Activated naive CD4-positive, alpha-beta T cell treated with anti-CD3 and anti-CD28 coated beads, Interleukin-2, amount 10 ng/mL, durations not matched to agents 7 days and 5 days (primary cell): ENCODE measurements at regions of chr3 and their contacts with region 1.

Region 1: DNA sequence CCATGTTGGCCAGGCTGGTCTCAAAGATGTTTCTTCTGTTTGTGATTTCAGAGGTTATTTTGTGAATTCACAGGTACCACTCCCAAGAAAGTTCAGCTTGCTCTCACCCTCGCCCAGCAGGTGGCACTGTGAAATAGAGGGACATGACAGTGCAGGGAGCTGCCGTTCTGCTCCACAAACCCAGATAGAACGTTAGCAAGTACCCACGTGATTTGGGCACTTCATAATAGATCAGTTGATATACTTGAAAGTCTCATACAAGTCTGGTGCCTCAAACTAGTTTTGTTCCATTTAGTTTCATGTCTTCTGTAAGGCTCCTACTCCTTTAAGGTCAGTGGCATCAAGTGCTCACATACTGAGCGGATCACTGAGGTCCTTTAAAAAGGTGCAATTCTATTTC is 45.5 kb downstream of the FILIP1L start:
- DNase-seq: peak; percentile 91
- H3K4me3 Mint-ChIP-seq: no peak overlapping the region
- H3K27ac Mint-ChIP-seq: peak overlapping the region; percentile 13
- H3K4me1 Mint-ChIP-seq: peaks cover 58% of the 10 kb centered on the region
- H3K27me3 Mint-ChIP-seq: no peaks in the 10 kb centered on the region

Region 2: DNA sequence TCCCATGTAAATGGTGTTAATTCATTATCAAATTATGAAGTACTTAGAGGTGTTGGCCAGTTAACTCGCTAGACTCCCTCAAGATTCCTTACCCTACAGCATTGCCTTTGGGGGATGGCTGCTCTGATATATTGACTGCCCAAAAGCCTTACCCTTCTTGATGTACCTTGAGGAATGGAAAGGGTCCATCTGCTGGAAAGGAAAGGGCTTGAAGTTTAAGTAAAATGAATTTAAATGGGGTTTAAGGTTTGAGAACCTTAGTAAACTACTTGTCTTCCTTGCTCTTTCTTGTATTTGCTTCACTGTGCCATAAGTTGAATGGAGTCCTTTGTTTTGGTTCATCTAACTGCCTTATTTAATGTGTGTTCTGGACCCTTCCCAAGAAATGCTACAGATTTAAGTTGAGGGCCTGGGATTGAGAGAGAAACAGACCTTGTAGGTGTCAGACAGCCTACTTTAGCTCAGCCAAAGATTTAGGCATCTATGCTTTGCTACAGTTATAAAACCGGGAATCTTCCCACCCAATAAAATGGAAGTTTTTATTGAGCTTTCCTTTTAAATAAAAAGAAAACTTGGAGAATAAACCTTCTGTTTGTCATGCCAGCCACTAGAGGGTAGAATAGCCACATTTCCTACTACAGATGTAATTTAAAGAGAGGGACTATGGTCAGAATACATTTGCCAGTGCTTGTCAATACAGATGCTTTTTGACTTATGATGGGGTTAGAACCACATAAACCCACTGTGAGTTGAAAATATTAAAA is 225.8 kb before region 1 on chr3:
- CTCF ChIA-PET with region 1: interaction called, 16 read pairs
- DNase-seq: no peak
- H3K4me3 Mint-ChIP-seq: no peak overlapping the region
- H3K27ac Mint-ChIP-seq: no peak overlapping the region
- H3K4me1 Mint-ChIP-seq: no peaks in the 10 kb centered on the region
- H3K27me3 Mint-ChIP-seq: no peaks in the 10 kb centered on the region